RWPE1 (cell line): ENCODE measurements at regions of chr17 and their contacts with region 1.

Region 1: DNA sequence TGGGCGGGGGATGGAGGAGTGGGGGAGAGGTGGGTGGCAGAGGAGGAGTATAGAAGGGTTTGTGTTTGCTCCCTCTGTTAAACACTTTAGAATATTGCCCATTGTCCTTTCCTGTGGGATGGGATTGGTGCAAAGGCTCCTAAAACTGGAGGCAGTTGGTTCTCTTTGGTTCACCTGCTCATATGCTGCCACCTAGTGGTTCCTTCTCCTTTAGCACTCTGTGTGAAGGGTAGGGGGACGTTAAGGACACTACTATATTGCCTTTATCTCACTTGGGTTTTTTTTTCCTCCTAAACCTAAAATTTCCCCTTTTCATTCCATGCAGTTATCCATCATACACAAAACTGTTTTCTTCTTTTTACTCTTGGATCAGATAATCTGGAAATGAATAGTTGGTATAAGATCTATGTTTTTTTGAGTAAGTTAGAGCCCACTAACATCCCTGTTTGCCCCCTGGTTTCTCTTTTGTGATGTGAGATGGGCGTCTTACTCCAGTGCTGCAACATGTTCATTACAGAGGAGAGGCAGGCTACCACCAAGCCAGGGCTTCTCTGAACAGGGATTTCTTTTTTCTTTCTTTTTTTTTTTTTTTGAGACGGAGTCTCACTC is 23.8 kb downstream of the SNX11 start:
- DNase-seq: peak; percentile 67
- H3K27ac ChIP-seq: peak overlapping the region; percentile 53
- CTCF ChIP-seq: peak; percentile 91

Region 2: DNA sequence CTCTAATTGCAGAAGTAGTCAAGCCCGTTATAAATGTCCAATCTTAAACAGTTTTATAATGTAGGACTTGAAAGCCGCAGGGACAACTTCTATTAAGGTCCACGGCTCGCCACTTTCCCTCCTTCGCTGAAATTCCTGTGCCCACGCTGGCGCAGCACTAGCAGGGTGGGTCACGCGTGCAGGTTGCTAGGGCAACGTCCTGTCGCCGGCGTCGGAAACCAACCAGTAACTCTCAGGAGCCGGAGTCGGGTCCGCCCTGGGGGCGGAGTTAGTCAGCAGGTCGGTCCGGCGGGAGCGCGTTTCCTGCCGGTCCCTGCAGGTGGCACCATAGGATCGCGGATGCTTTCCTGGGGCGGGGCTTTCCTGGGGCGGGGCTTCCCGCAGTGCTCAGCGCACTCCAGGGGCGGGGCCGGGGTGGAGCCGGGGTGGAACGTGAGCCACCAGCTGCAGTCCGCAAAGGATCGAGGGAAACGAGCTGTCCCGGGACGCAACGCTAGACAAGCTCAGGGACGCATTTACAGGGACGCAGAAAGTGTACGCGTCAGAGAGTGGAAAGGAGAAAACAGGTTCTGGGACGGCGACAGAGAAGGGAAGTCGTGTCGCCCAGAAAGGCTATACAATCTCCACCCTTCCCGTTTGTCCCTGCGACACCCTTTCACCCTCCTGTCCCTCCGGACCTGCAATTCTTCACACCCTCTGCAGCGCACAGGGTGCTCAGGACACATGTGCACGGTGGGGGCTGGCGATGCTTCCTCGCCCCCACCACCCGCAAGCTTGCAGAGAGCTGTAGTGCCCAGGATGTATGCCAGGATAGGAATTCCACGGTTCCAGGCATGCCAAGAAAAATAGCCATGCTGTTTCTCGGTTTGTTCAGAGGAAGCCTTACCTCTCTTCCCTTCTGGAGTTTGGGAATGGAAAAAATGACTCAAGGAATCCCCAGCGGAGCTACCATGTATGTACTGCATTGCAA is 106.1 kb before region 1 on chr17:
- CTCF ChIA-PET with region 1: interaction called, 18 read pairs
- POLR2A ChIA-PET with region 1: no interaction called
- DNase-seq: peak; percentile 94
- H3K27ac ChIP-seq: peak overlapping the region; percentile 98
- CTCF ChIP-seq: peak; percentile 93

Region 3: DNA sequence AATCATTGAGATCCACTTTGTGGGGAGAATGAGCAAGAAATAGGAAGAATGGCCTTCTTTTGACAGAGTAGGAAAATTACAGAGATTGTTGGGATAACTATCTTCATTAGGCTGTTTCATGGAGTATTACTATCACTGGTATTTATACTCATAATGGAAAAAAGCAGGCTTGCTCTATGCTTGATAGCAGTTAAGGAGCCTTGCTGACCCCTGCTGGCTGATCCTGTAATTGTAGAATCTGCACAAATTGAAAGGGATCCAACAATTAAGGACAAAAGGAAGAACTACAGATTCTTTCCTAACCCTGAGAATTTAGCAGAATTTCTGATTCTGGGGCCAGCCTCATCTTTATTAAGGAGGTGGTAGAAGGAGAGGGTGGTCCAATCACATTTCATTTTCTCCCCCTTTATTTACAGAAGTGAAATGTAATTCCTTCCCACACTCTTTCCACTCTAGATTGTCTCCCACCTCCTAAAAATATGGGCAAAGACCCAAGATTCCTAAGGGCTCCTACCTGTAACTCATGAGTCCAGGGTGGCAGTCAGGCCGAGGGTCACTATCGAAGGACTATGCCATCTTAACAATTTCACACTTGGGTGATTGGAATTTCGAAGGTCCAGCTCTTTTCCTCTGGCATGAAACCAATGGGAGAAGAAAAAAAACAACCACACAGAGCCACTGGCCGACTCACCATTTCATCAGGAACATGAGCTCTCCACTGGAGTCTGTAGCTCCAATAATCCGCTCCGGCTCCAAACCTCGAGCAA is 56.8 kb before region 1 on chr17:
- CTCF ChIA-PET with region 1: interaction called, 12 read pairs
- POLR2A ChIA-PET with region 1: no interaction called
- DNase-seq: peak; percentile 53
- H3K27ac ChIP-seq: peak overlapping the region; percentile 61
- CTCF ChIP-seq: peak; percentile 86